ENCODE measurements at regions of chr19 and their contacts with region 1.

Region 1: DNA sequence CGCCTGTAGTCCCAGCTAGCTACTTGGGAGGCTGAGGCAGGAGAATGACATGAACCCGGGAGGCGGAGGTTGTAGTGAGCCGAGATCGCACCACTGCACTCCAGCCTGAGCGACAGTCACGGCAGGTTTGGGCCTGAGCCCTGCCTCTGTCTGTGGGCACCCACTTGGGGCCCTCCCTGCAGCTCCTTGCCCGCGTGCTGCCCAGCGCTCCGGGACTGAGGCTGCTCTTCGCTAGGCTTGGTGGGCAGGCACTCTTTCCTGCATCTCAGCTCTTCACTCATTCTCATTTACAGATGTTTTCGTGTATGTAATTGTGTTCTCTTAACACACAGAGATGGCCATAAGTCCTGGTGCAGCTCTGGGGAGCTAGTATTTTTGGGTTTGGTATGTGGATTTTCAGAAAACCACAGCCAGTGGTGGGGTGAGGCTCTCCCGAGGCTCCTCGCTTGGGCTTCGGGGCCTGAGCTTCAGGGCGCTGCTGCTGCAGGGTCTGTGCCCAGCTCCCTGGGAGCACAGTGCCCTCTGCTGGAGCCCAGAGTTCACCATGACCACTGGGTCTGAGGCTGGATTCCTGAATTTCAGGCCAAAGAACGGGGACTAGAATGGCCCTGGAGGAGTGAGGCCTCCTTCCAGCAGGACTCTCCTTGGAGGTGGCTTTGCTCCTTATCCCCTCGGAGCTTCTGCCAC is 15.2 kb downstream of the UPF1 start:
- DNase-seq: peak; percentile 70
- H3K4me3 ChIP-seq: no peak overlapping the region
- H3K27ac ChIP-seq: no peak overlapping the region
- H3K4me1 ChIP-seq: peaks cover 48% of the 10 kb centered on the region
- H3K27me3 ChIP-seq: no peaks in the 10 kb centered on the region
- CTCF ChIP-seq: peak; percentile 91 to 92
- POLR2A ChIP-seq: no peak

Region 2: DNA sequence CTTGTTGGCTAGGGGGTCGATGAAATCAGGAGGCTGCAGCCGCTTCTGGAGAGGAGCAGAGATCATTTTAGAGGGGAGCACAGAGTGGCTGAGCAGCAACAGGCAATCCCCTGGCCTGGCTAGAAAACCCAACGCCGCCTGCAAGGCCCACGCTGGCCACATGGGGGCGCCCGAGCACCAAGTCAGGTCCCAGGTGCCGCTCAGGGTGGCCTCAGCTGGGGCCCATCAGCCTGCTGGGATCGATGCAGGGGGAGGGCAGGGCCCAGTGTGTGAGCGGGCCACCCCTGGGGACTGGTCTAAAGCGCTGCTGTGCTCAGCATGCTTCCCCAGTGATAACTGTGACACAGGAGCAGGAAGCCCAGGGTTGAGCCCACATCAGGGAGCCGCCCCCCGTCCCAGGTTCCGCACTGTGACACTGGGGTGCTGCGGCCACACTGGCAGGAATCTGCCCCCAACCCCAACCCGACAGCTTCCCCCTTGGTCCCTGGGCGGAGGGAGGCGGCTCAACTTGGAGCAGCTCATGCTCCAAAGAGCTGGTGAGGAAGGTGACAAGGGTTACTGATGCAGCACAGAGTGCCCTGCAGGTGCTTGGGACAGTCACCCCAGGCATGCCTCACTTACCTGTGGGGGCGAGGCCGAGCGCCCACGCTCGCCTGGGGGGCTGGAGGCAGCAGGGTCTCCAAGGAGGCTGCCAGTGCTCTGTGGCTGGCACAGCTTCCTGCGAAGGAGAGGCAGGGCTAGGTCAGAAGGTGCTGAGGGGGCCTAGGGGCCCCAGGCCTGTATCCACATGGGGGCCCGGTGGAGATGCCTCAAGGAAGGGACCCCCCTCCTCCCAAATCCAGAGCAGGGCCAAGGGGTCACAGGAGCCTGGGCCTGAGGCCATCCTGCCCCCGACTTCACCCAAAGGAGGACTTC is 395.8 kb before region 1 on chr19:
- CTCF ChIA-PET with region 1: interaction called, 10 read pairs
- POLR2A ChIA-PET with region 1: no interaction called
- dilution Hi-C with region 1: no loop called
- intact Hi-C with region 1: loop called (anchors 2 kb)
- DNase-seq: peak; percentile 65
- H3K4me3 ChIP-seq: no peak overlapping the region
- H3K27ac ChIP-seq: no peak overlapping the region
- H3K4me1 ChIP-seq: no peaks in the 10 kb centered on the region
- H3K27me3 ChIP-seq: no peaks in the 10 kb centered on the region
- CTCF ChIP-seq: peak; percentile 97 to 99
- POLR2A ChIP-seq: no peak

Region 3: DNA sequence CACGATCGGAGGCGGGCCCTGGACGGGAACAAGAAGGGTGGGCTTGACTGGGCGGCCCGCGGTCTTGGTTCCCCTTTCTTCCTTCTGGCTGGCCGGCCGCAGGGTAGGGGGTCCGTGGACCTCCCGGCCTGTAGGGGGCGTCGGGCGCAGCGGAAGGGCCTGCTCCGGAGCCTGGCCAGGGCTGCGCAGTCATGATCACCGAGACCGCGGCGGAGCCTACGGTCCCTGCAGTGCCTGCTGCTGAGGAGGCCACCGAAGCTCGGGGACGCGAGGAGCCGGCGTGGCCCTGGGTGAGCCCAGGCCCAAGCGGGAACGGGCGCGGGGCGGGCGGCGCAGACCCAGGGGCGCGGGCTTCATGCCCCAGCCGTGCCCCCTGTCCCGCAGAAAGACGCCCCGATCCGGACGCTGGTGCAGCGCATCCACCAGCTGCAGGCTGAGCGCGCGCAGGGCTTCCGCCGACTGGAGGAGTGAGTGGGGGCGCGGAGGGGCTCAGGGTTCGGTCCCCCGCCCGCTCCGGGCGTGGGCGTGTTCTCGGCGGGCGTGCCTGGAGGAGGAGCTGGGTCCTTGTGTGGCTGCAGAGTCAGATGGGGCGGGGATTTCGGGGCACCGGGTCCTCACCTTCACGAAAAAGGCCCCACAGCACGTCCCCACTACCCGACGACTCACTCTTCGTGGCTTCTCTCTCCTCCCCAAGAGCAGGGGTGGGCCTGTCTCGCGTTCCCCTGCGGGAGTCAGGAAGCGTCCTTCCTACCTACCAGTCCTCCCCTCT is 258.2 kb before region 1 on chr19 and contains the start of gene REX1BD:
- CTCF ChIA-PET with region 1: interaction called, 65 read pairs
- POLR2A ChIA-PET with region 1: no interaction called
- dilution Hi-C with region 1: no loop called
- intact Hi-C with region 1: no loop called
- DNase-seq: peak; percentile 85
- H3K4me3 ChIP-seq: peak within 1 kb of the TSS; percentile 32 to 78 (median 65)
- H3K27ac ChIP-seq: peak within 1 kb of the TSS; percentile 16
- H3K4me1 ChIP-seq: peaks cover 15% of the 10 kb centered on the region
- H3K27me3 ChIP-seq: no peaks in the 10 kb centered on the region
- CTCF ChIP-seq: peak; percentile 95 to 96
- POLR2A ChIP-seq: peak; percentile 87
- total RNA-seq, gene REX1BD: 64.0 and 64.4 TPM in 2 replicates

Region 4: DNA sequence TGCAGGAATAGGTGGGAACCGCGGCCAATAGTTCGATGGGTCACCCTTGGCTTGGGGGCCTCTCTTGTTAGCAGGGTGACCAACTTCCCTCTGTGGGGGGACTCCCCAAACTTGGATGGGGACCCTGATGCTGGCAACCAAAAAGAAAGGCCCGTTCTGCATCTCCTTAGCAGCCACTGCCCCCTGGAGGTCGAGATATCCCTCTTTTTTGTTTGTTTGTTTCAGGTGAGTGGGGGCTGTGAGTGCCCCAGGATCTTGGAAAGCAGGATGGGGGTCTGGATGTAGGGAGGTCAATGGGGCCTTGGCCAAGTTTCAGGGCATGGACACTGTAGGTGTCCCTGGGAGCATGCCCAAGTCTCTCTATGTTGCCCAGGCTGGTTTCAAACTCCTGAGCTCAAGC is 171.2 kb before region 1 on chr19:
- CTCF ChIA-PET with region 1: interaction called, 11 read pairs
- POLR2A ChIA-PET with region 1: no interaction called
- dilution Hi-C with region 1: no loop called
- intact Hi-C with region 1: no loop called
- DNase-seq: no peak
- H3K4me3 ChIP-seq: no peak overlapping the region
- H3K27ac ChIP-seq: no peak overlapping the region
- H3K4me1 ChIP-seq: peaks cover 17% of the 10 kb centered on the region
- H3K27me3 ChIP-seq: no peaks in the 10 kb centered on the region
- CTCF ChIP-seq: peak; percentile 33 to 38
- POLR2A ChIP-seq: no peak

Region 5: GRCh38 chr19:18785179-18786128 is 61.6 kb before region 1 on chr19:
- CTCF ChIA-PET with region 1: interaction called, 10 read pairs
- POLR2A ChIA-PET with region 1: no interaction called
- dilution Hi-C with region 1: no loop called
- intact Hi-C with region 1: loop called (anchors 5 kb)
- DNase-seq: peak; percentile 34
- H3K4me3 ChIP-seq: no peak overlapping the region
- H3K27ac ChIP-seq: no peak overlapping the region
- H3K4me1 ChIP-seq: no peaks in the 10 kb centered on the region
- H3K27me3 ChIP-seq: peaks cover 35 to 36% of the 10 kb centered on the region in 2 experiments
- CTCF ChIP-seq: no peak
- POLR2A ChIP-seq: no peak

Region 6: DNA sequence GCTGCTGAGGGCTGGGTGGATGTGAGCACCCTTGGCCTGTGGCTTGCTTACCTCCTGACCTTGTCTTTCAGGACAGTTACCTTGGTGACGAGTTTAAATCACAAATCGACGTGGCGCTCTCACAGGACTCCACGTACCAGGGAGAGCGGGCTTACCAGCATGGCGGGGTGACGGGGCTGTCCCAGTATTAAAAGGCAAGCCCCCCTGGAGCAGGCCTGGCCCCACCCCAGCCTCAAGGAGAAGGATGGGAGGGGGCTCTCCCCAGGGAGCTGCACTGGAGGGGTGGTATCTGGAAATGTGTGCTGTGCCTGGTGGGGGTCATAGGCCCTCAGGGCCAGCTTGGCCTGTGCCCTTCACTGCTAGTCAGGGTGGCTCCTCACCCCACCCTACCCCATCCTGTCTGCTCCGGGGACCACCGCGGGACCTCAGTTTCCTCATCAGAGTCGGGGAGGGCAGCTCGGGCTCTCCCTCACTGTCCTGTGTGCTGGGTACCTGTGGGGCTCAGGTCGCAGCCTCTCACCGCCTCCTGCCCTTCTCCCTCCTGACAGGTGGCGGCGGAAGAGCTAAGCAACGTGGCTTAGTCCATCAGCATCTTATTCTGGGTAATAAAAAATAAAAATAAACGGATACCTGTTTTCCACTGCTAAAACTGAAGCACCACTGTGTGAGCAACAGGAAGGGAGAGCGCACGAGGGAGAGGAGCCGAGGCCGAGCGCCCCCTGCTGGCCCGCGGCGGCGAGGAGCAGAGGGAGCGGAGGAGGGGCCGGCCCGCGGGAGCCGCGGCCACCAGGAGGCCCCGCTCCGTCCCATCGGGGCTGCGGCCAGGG is 19.2 kb after region 1 on chr19:
- CTCF ChIA-PET with region 1: interaction called, 32 read pairs
- POLR2A ChIA-PET with region 1: no interaction called
- dilution Hi-C with region 1: no loop called
- intact Hi-C with region 1: loop called (anchors 2 kb)
- DNase-seq: peak; percentile 60
- H3K4me3 ChIP-seq: no peak overlapping the region
- H3K27ac ChIP-seq: no peak overlapping the region
- H3K4me1 ChIP-seq: no peaks in the 10 kb centered on the region
- H3K27me3 ChIP-seq: peaks cover 5 to 7% of the 10 kb centered on the region in 2 experiments
- CTCF ChIP-seq: peak; percentile 93 to 99
- POLR2A ChIP-seq: no peak

Region 7: GRCh38 chr19:18985257-18985656 is 138.3 kb after region 1 on chr19:
- CTCF ChIA-PET with region 1: interaction called, 7 read pairs
- POLR2A ChIA-PET with region 1: no interaction called
- dilution Hi-C with region 1: no loop called
- intact Hi-C with region 1: loop called (anchors 5 kb)
- DNase-seq: peak; percentile 92
- H3K4me3 ChIP-seq: no peak overlapping the region
- H3K27ac ChIP-seq: peak overlapping the region; percentile 30
- H3K4me1 ChIP-seq: peaks cover 16% of the 10 kb centered on the region
- H3K27me3 ChIP-seq: peaks cover 0 to 8% of the 10 kb centered on the region in 2 experiments
- CTCF ChIP-seq: no peak
- POLR2A ChIP-seq: no peak

Measured in endothelial cell of umbilical vein (primary cell).